ENCODE measurements at regions of chr17 and their contacts with region 1.

Region 1: DNA sequence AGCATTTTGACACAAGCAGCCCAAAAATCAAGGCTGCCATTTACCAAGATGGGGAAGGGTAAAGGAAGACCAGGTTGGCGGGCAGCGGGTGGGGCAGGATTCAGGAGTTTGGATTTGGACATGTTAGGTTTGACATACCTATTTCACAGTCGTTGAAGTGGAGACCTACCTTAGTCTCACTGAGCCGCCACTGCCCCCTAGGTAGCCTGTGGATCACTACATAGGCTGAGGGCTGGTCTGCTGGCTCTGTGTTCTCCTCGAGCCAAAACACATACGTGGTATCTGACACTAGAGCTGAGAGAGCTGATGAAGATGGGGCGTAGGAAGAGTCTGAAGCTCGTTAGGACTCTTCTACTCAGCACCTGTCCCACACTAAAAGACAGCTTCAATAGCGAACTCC is 115.1 kb downstream of the HIC1 start:
- DNase-seq: peak; percentile 68
- ATAC-seq: peak; percentile 91
- H3K4me3 Mint-ChIP-seq: no peak overlapping the region
- H3K27ac Mint-ChIP-seq: no peak overlapping the region
- H3K4me1 Mint-ChIP-seq: peaks cover 10% of the 10 kb centered on the region
- H3K27me3 Mint-ChIP-seq: no peaks in the 10 kb centered on the region
- CTCF ChIP-seq: peak; percentile 48; the same call in 1 of the 2 replicates

Region 2: GRCh38 chr17:2002767-2003329 is 167.2 kb before region 1 on chr17:
- CTCF ChIA-PET with region 1: no interaction called
- POLR2A ChIA-PET with region 1: no interaction called
- DNase-seq: no peak
- ATAC-seq: no peak
- H3K4me3 Mint-ChIP-seq: no peak overlapping the region
- H3K27ac Mint-ChIP-seq: no peak overlapping the region
- H3K4me1 Mint-ChIP-seq: peaks cover 11% of the 10 kb centered on the region
- H3K27me3 Mint-ChIP-seq: peaks cover 15% of the 10 kb centered on the region
- CTCF ChIP-seq: no peak

Region 3: DNA sequence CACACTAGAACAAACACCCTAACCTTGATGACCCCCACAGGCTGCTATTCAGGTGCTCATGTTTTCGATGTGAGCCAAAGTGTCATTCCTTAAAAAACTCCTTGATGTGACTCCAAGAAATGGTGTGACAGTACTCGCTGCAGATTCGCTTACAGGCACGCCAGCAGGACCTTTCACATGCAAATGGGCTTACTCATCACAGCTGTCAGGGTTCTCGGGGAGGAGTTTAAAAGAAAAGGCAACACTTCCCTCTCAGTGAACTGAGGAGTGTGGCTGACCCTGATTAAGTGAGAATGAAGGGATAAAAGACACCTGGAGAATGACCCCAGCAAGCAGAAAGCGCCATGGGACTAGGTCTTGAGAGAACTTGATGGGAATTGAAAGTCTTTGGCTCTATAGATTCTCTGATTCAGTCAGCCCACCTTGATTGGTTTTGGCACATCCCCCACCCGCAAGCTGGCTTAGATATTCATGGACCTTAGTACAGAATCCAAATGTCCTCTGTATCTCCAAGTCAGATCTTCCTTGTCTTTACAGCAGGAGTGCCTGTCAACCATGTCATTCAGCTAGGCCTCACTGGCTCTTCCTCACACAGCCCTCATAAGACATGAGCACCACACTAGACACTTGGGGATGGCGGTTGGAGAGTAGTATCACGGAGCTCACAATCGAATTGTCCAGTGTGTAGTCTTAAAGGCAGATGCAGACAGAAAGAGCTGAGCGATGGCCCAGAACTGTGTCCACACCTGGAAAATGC is 32.5 kb before region 1 on chr17:
- CTCF ChIA-PET with region 1: interaction called, 10 read pairs
- POLR2A ChIA-PET with region 1: no interaction called
- DNase-seq: peak; percentile 60
- ATAC-seq: peak; percentile 96
- H3K4me3 Mint-ChIP-seq: peak overlapping the region; percentile 39
- H3K27ac Mint-ChIP-seq: peak overlapping the region; percentile 94
- H3K4me1 Mint-ChIP-seq: peaks cover 38% of the 10 kb centered on the region
- H3K27me3 Mint-ChIP-seq: no peaks in the 10 kb centered on the region
- CTCF ChIP-seq: no peak

Measured in WTC11 (cell line).